ENCODE measurements at regions of chr3 and their contacts with region 1.

Region 1: GRCh38 chr3:69691860-69692259 is 47.4 kb upstream of the MITF start:
- DNase-seq: no peak
- ATAC-seq: no peak
- H3K4me3 ChIP-seq: no peak overlapping the region
- H3K4me1 ChIP-seq: no peaks in the 10 kb centered on the region
- CTCF ChIP-seq: no peak

Region 2: GRCh38 chr3:68793759-68794701 is 897.8 kb before region 1 on chr3:
- intact Hi-C with region 1: no loop called
- DNase-seq: no peak
- ATAC-seq: no peak
- H3K4me3 ChIP-seq: no peak overlapping the region
- H3K4me1 ChIP-seq: no peaks in the 10 kb centered on the region
- CTCF ChIP-seq: no peak

Region 3: DNA sequence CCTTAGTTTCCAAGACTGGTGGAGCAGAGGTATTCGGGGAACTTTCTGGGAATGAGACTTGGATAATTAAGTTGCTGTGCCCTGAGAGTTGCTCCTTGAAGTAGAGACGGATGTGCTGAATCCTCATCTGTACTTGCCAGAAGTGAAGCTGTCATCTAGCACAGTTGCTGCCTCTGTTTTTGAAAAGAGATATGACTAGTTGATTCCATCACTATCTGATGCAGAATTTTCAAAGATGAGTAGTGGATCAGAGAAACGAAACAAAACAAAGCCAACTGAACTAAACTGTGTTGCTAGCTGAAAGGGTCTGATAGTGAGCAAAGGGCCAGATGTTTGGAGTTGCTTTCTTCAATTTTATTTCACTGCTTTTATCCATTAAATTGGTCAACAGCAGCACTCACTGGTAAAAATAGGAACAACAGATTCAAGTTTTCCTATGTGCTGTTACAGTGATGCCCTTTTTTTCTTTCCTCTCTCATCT is 100.1 kb after region 1 on chr3:
- intact Hi-C with region 1: loop called in 1 of 2 experiments (anchors 10 kb)
- DNase-seq: no peak
- ATAC-seq: peak; percentile 15
- H3K4me3 ChIP-seq: no peak overlapping the region
- H3K4me1 ChIP-seq: no peaks in the 10 kb centered on the region
- CTCF ChIP-seq: no peak

Region 4: DNA sequence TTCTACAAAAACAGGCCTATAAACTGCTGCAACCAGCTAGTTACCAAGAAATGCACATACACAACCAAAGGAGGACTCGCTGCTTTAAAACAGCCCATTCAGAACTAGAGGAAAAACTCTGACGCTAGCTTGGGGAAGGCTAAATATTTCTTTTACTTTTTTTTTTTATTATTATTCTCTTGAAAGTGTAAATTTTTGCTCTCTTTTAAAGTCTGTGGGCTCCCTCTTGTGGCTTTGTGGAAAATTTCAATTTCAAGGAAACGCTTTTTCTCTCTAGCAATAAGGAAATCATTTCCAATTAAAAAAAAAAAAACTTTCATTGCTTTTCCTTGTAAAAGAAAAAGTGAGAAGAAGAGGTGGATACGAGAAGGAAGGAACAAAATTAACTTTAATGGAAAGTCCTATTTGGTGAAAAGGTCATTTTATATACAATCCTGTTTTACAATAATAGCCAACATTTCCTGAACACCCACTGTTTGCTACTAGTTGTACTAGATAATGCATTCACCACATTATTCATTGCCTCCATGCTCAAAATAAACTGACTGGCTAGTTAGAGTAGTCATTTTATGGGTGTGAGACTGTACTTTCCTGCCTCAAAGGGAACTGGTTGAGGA is 256.5 kb after region 1 on chr3:
- intact Hi-C with region 1: loop called (anchors 5 to 10 kb)
- DNase-seq: peak in 1 of 3 donors; percentile 6
- ATAC-seq: peak; percentile 60
- H3K4me3 ChIP-seq: no peak overlapping the region
- H3K4me1 ChIP-seq: peaks cover 4% of the 10 kb centered on the region
- CTCF ChIP-seq: peak; percentile 46

Measured in mucosa of descending colon (tissue), 3 donors.